AG04449 (cell line): ENCODE measurements at regions of chr5 and their contacts with region 1.

Region 1: DNA sequence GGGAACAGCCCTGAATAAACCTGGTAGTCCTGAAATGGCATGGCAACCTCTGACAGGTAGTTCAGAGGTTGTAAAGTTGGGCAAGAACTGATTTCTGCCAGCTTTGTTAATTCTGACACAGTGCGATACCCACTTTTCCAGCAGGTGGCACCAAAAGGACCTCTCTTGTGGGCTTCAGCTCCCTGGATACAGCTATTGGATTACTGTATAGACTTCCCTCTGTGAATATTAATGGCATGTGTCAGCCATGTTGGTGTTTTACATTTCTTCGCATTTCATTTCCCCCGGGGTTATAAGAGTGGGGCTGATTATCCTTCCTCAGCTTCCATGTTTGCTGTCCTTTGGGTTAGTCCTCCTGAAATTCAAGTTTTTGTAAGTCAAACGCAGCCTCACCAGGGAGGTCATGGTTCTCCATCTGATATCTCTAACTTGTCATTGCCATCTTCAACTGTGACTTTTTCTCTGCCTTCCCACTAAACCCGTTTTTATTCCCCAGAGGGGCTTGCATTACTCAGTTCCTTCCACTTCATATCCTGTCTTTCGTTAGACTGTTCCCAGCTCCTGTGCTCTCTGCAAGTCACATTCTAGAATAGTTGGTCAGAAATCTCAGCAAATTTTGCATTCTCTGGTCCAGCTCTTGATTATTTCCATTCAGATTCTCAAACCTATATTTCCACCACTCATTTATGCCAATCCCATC is 135.6 kb downstream of the LIFR start:
- DNase-seq: no peak
- H3K4me3 ChIP-seq: no peak overlapping the region
- CTCF ChIP-seq: peak; percentile 78

Region 2: GRCh38 chr5:38273624-38274023 is 147.2 kb before region 1 on chr5:
- CTCF ChIA-PET with region 1: no interaction called
- POLR2A ChIA-PET with region 1: no interaction called
- DNase-seq: no peak
- H3K4me3 ChIP-seq: no peak overlapping the region
- CTCF ChIP-seq: no peak

Region 3: GRCh38 chr5:38404667-38405276 is 16.1 kb before region 1 on chr5:
- CTCF ChIA-PET with region 1: interaction called, 25 read pairs
- POLR2A ChIA-PET with region 1: no interaction called
- DNase-seq: no peak
- H3K4me3 ChIP-seq: no peak overlapping the region
- CTCF ChIP-seq: no peak

Region 4: GRCh38 chr5:38433160-38433861 is 12.5 kb after region 1 on chr5:
- CTCF ChIA-PET with region 1: interaction called, 81 read pairs
- POLR2A ChIA-PET with region 1: interaction called, 5 read pairs
- DNase-seq: peak; percentile 77
- H3K4me3 ChIP-seq: no peak overlapping the region
- CTCF ChIP-seq: no peak

Region 5: DNA sequence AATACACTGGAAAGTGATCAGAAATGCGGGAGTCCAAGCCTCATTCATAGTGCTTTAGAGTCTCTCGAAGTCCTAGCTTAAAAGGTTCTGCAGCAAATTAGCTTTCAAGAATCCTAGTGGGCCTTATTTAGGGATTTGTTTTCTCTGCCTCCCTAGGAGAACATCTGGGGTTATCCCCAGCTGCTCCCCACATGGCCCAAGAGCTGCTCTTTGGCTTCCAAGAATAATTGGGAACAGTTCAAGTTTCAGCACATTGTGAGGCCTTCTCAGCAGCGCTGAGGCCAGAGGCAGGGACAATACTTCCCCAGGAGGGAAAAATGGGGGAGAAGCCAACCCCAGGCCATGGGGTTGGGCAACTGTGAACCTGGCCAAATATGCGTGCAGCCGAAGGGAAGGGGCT is 26.9 kb after region 1 on chr5:
- CTCF ChIA-PET with region 1: interaction called, 80 read pairs
- POLR2A ChIA-PET with region 1: no interaction called
- DNase-seq: no peak
- H3K4me3 ChIP-seq: no peak overlapping the region
- CTCF ChIP-seq: no peak

Region 6: DNA sequence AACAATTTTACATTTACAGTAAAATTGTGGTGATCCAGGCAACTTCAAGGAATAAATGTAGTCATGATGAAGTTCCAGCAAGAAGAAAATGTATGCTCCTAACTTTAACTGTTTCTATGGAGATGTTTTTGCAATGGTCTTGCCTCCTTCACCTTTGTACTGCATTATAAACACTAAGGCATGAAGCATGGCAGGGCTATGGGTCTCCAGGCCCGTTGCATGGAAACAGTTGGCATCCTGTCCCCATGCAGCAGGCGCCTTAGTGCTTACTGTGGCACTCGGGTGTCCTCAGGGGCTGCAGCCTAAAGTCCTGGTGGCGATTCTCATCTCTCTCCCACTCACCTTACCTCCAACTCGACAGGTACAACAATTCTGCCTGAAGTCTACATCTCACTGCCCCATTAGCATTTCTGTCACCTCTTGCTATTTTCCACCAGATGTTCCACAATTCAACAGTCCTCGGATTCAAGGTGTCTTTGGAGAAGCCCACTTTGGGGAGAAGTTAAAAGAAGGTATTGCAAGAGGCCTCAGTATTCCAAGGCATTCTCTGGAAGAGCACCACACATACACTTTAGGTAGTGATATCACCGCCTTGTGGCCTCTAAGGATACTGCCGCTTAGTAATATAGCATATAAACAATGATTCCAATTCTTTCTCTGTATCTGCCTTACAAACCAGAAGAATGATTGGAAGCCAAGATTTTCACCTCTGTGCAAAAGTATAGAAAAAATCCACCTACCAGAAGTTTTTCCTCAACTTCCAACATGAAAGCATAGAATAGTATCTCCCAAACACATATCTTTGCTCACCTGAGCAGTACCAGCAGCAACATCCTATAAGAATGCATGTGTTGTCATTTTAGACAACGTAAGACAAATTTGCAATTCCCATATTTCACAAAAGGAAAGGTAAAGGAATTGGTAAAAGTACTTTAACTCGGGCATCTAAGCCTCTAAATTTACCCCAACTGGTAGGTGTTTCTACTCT is 130.5 kb after region 1 on chr5:
- CTCF ChIA-PET with region 1: interaction called, 19 read pairs
- POLR2A ChIA-PET with region 1: no interaction called
- DNase-seq: no peak
- H3K4me3 ChIP-seq: no peak overlapping the region
- CTCF ChIP-seq: peak; percentile 71